GM12878 (cell line): ENCODE measurements at regions of chr4 and their contacts with region 1.

Region 1: DNA sequence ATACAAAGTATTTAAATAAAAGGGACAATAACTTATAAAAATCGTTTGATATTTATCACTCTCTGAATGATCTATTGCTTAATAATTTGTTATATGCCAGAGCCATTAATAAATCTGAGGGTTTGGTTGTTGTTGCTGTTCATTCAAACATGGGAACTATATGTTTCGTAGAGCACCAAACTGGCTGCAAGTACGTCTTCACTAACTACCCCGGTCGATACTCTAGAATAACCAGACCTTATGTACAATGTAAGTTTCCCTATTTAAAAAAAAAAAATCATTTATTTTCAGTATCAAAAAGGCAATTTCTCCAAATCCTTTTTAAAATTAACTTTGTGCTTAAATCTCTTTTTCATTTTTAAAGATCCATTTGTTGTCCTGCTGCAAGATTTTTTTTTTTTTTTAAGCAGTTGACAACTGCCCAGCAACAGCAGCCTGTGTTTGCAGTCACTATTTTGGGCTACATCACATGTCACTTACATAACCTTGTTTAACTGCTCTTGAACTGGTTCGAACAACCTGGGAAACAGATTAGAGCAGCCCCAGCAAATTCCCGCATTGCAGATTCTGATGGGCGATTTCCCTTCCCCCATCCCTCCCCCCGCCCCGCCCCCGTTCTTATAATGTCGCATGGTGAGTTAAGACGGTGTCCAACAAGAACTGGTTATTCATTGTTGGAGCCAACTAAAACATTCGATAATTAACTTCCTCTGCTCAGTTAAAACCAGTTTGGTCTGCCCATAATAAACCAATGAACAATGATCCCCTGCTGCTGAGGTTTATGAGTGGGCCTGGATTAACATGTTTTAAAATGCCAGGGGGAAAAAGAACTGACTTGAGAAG is 238.9 kb downstream of the NR3C2 start:
- DNase-seq: no peak
- ATAC-seq: no peak
- H3K4me3 ChIP-seq: no peak overlapping the region
- H3K27ac ChIP-seq: no peak overlapping the region
- H3K4me1 ChIP-seq: no peaks in the 10 kb centered on the region
- H3K27me3 ChIP-seq: no peaks in the 10 kb centered on the region; a peak in 1 of 4 replicates
- CTCF ChIP-seq: no peak
- EP300 ChIP-seq: no peak
- POLR2A ChIP-seq: no peak
- RAD21 ChIP-seq: no peak

Region 2: DNA sequence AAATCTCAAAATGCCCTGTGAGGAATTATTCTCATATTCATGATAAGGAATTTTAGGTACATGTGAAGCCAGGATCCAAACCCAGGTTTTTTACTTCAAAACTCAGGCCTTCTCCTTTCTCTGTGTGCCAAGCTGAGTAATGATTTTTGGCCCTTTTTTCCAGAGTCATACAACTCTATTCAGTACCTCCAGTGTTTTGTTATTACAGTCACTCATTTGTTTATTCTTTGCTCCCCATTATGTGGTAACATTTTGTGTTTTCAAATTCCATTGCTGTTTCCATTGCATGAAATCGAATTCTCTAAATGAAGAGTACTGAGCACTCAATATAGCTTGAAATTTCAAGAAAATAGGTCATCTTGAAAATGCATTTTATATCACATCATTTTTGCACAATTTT is 76.5 kb before region 1 on chr4:
- CTCF ChIA-PET with region 1: no interaction called
- POLR2A ChIA-PET with region 1: no interaction called
- RAD21 ChIA-PET with region 1: no interaction called
- SMC1A ChIA-PET with region 1: no interaction called
- in situ Hi-C with region 1: no loop called
- intact Hi-C with region 1: no loop called
- DNase-seq: no peak
- ATAC-seq: no peak
- H3K4me3 ChIP-seq: no peak overlapping the region
- H3K27ac ChIP-seq: no peak overlapping the region
- H3K4me1 ChIP-seq: no peaks in the 10 kb centered on the region
- H3K27me3 ChIP-seq: no peaks in the 10 kb centered on the region
- CTCF ChIP-seq: no peak
- EP300 ChIP-seq: no peak
- POLR2A ChIP-seq: no peak
- RAD21 ChIP-seq: no peak

Region 3: GRCh38 chr4:148224476-148224875 is 21.2 kb after region 1 on chr4:
- CTCF ChIA-PET with region 1: no interaction called
- POLR2A ChIA-PET with region 1: interaction called, 3 read pairs
- RAD21 ChIA-PET with region 1: no interaction called
- SMC1A ChIA-PET with region 1: no interaction called
- in situ Hi-C with region 1: no loop called
- intact Hi-C with region 1: loop called (anchors 1 kb)
- DNase-seq: no peak
- ATAC-seq: no peak
- H3K4me3 ChIP-seq: no peak overlapping the region
- H3K27ac ChIP-seq: no peak overlapping the region
- H3K4me1 ChIP-seq: no peaks in the 10 kb centered on the region
- H3K27me3 ChIP-seq: no peaks in the 10 kb centered on the region
- CTCF ChIP-seq: no peak
- EP300 ChIP-seq: no peak
- POLR2A ChIP-seq: no peak
- RAD21 ChIP-seq: no peak